Activated CD4-positive, alpha-beta T cell treated with anti-CD3 and anti-CD28 coated beads for 36 hours (primary cell): ENCODE measurements at regions of chr9 and their contacts with region 1.

Region 1: DNA sequence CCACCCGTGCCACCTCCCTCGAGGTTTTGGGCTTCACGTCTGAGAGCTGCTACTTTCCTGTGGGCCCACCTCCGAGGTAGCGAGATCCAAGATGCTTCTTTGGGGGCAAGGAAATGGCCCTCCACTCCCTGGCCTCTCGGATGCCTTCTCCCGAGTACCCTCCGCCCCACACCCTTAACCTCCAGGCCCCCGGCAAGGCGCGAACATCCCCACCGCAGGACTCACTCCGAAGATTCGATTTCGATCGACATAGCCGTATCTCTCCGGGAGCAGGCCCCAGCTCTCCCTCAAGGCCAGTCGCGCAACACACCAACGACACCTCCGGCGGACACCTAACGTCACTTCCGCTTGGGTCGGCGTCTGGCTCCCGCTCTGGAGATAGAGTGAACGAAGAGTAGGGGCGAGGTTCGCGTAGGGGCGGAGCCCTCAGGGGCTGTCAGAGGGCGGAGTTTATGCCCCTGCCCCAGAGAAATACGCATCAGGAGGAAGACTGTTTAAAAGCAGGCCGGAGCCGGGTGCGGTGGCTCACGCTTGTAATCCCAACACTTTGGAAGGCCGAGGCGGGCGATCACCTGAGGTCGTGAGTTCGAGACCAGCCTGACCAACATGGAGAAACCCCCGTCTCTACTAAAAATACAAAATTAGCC is at the start of gene SMU1:
- DNase-seq: peak; percentile 98
- ATAC-seq: peak; percentile 93
- H3K4me3 Mint-ChIP-seq: peak within 1 kb of the TSS; percentile 100
- H3K27ac Mint-ChIP-seq: peak within 1 kb of the TSS; percentile 100
- H3K4me1 Mint-ChIP-seq: peaks cover 39% of the 10 kb centered on the region
- H3K27me3 Mint-ChIP-seq: no peaks in the 10 kb centered on the region
- total RNA-seq, gene SMU1: 23.2 to 29.6 TPM

Region 2: GRCh38 chr9:32384364-32385151 is 691.9 kb before region 1 on chr9 and contains the start of gene ACO1:
- CTCF ChIA-PET with region 1: no interaction called
- POLR2A ChIA-PET with region 1: no interaction called
- intact Hi-C with region 1: loop called in 1 of 2 experiments (anchors 10 kb)
- DNase-seq: peak; percentile 90
- ATAC-seq: peak; percentile 93
- H3K4me3 Mint-ChIP-seq: peak within 1 kb of the TSS; percentile 78
- H3K27ac Mint-ChIP-seq: peak within 1 kb of the TSS; percentile 16
- H3K4me1 Mint-ChIP-seq: peaks cover 12% of the 10 kb centered on the region
- H3K27me3 Mint-ChIP-seq: peaks cover 16% of the 10 kb centered on the region
- total RNA-seq, gene ACO1: 15.5 TPM

Region 3: GRCh38 chr9:33024966-33025571 is 51.4 kb before region 1 on chr9 and contains the start of gene DNAJA1:
- CTCF ChIA-PET with region 1: interaction called, 3 read pairs
- POLR2A ChIA-PET with region 1: interaction called, 12 read pairs
- intact Hi-C with region 1: loop called (anchors 1 to 5 kb)
- DNase-seq: peak; percentile 97
- ATAC-seq: peak; percentile 82
- H3K4me3 Mint-ChIP-seq: peak within 1 kb of the TSS; percentile 98
- H3K27ac Mint-ChIP-seq: peak within 1 kb of the TSS; percentile 94
- H3K4me1 Mint-ChIP-seq: peaks cover 59% of the 10 kb centered on the region
- H3K27me3 Mint-ChIP-seq: no peaks in the 10 kb centered on the region
- total RNA-seq, gene DNAJA1: 198 to 266 TPM

Region 4: DNA sequence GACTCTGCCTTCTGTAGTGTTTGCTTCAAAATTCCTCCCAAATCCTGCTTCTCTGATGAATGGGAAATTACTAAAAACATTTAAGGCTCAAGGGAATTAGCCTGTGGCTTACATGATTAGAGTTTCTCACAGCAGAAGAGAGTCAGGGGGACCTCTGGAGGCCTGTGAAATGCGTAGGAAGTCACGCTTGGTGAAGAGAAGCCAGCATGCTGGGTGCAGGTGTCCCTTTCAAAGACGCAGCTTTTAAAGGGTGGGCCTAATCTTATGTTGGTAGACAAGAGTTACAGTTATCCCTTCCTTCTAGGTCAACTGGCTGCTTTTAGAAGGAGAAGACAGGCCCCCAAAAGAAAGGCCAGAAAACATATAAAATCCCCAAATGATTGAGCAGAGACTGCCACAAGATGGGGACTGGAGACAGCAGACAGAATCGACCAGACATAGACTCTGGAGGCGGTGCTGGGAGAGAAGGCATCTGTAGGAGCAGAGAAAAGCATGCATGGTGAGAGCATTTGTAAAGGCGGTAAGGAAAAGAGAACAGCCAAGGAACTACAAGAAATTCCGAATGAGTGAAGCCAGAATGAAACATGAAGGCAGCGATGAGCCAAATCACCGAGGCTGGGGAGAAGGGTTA is 48.4 kb after region 1 on chr9:
- CTCF ChIA-PET with region 1: no interaction called
- POLR2A ChIA-PET with region 1: no interaction called
- intact Hi-C with region 1: no loop called
- DNase-seq: no peak
- ATAC-seq: no peak
- H3K4me3 Mint-ChIP-seq: no peak overlapping the region
- H3K27ac Mint-ChIP-seq: no peak overlapping the region
- H3K4me1 Mint-ChIP-seq: peaks cover 18% of the 10 kb centered on the region
- H3K27me3 Mint-ChIP-seq: no peaks in the 10 kb centered on the region

Region 5: GRCh38 chr9:33225319-33226149 is 149.1 kb after region 1 on chr9:
- CTCF ChIA-PET with region 1: interaction called, 18 read pairs
- POLR2A ChIA-PET with region 1: no interaction called
- intact Hi-C with region 1: loop called (anchors 1 kb)
- DNase-seq: peak; percentile 85
- ATAC-seq: peak; percentile 82
- H3K4me3 Mint-ChIP-seq: no peak overlapping the region
- H3K27ac Mint-ChIP-seq: peak overlapping the region; percentile 38
- H3K4me1 Mint-ChIP-seq: peaks cover 16% of the 10 kb centered on the region
- H3K27me3 Mint-ChIP-seq: no peaks in the 10 kb centered on the region

Region 6: GRCh38 chr9:33415501-33416038 is 339.1 kb after region 1 on chr9:
- CTCF ChIA-PET with region 1: no interaction called
- POLR2A ChIA-PET with region 1: no interaction called
- intact Hi-C with region 1: loop called in 1 of 2 experiments (anchors 5 kb)
- DNase-seq: peak; percentile 97
- ATAC-seq: peak; percentile 92
- H3K4me3 Mint-ChIP-seq: peak overlapping the region; percentile 31
- H3K27ac Mint-ChIP-seq: peak overlapping the region; percentile 95
- H3K4me1 Mint-ChIP-seq: peaks cover 41% of the 10 kb centered on the region
- H3K27me3 Mint-ChIP-seq: no peaks in the 10 kb centered on the region